ENCODE measurements at regions of chr14 and their contacts with region 1.

Region 1: GRCh38 chr14:95943699-95944098 is 67.1 kb downstream of the TUNAR start:
- DNase-seq: no peak
- ATAC-seq: no peak
- H3K4me3 ChIP-seq: no peak overlapping the region
- H3K27ac ChIP-seq: no peak overlapping the region
- H3K4me1 ChIP-seq: no peaks in the 10 kb centered on the region
- H3K27me3 ChIP-seq: peaks cover 16% of the 10 kb centered on the region; the same call in 1 of the 2 replicates
- CTCF ChIP-seq: no peak
- POLR2A ChIP-seq: no peak
- RAD21 ChIP-seq: no peak

Region 2: GRCh38 chr14:95796788-95797187 is 146.9 kb before region 1 on chr14:
- CTCF ChIA-PET with region 1: no interaction called
- POLR2A ChIA-PET with region 1: no interaction called
- RAD21 ChIA-PET with region 1: no interaction called
- intact Hi-C with region 1: loop called (anchors 10 kb)
- DNase-seq: no peak
- ATAC-seq: no peak
- H3K4me3 ChIP-seq: no peak overlapping the region
- H3K27ac ChIP-seq: no peak overlapping the region
- H3K4me1 ChIP-seq: no peaks in the 10 kb centered on the region
- H3K27me3 ChIP-seq: peaks cover 29% of the 10 kb centered on the region
- CTCF ChIP-seq: no peak
- POLR2A ChIP-seq: no peak
- RAD21 ChIP-seq: no peak

Region 3: GRCh38 chr14:96038920-96039632 is 95.4 kb after region 1 on chr14 and contains the start of gene C14orf132:
- CTCF ChIA-PET with region 1: no interaction called
- POLR2A ChIA-PET with region 1: no interaction called
- RAD21 ChIA-PET with region 1: no interaction called
- intact Hi-C with region 1: no loop called
- DNase-seq: peak; percentile 18
- ATAC-seq: peak; percentile 81
- H3K4me3 ChIP-seq: peak within 1 kb of the TSS; percentile 63 to 76
- H3K27ac ChIP-seq: peak within 1 kb of the TSS; percentile 69; the same call in 1 of the 2 replicates
- H3K4me1 ChIP-seq: peaks cover 18 to 26% of the 10 kb centered on the region in 2 experiments
- H3K27me3 ChIP-seq: no peaks in the 10 kb centered on the region
- CTCF ChIP-seq: no peak
- POLR2A ChIP-seq: peak; percentile 49
- RAD21 ChIP-seq: no peak
- total RNA-seq, gene C14orf132: 3.4 TPM

Measured in HCT116 (cell line).